ENCODE measurements at regions of chr4 and their contacts with region 1.

Region 1: DNA sequence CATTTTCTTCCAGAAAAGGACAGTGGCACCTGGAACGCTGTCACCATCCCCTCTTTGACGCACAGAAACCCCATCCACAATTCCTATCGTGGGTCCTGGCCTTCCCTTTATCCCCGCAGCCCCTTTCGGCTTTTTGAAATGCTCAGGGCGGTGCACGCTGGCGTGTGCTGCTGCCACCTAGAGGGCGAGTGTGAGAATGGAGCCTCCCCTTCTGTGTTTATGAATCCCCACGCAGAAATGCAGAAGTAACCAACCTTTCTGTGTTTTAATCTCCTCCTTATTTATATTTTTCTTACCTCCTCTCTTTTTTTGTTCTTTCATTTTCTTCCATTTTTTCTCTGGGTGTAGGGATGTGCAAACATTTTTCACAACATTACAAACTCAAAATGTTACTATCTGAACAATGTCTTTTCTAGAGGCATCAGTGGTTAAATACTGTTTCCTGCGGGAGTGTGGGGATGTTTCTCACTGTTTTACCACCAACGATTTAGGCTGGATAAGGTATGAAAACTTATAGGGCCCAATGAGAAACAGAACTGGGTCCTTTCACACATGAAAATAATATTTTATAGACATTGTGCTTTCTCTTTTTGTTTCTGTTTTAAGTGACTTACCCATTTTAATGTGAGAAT is 50.0 kb downstream of the TMA16 start:
- DNase-seq: peak; percentile 65
- H3K4me3 ChIP-seq: peak overlapping the region in 3 of 4 donors; percentile 20 to 36 (median 30)
- H3K27ac ChIP-seq: no peak overlapping the region
- H3K4me1 ChIP-seq: peaks cover 0 to 6% (median 0%) of the 10 kb centered on the region in 4 donors
- H3K27me3 ChIP-seq: no peaks in the 10 kb centered on the region
- CTCF ChIP-seq: peak; percentile 38 to 92 (median 68)
- EP300 ChIP-seq: no peak
- POLR2A ChIP-seq: no peak

Region 2: DNA sequence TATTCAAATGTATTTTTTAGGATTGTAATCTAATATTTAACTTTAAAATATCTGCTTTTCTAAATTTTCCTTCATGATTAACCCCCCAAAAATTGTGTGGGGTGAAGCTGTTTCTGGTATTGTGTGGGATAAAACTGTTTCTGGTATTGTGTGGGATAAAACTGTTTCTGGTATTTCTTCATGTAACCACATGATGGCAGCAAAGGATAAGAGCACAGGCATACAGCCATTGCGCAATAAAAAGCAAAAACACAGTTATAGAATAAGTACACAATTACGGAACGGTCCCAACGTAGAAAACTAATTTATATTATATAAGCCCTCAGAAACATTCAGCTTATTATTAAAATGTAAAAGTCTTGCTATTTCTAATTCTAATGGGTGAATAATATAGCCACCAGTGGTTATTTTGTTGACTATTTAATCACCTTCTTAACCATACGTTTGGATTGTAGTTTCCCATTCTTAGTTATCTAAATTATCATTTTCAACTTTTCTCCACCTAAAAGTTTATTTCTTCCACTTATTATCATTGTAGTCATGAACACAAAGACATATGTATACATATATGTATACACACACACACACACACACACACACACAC is 1046.9 kb before region 1 on chr4:
- intact Hi-C with region 1: loop called (anchors 5 kb)
- DNase-seq: no peak
- H3K4me3 ChIP-seq: no peak overlapping the region
- H3K27ac ChIP-seq: no peak overlapping the region
- H3K4me1 ChIP-seq: no peaks in the 10 kb centered on the region
- H3K27me3 ChIP-seq: peaks cover 0 to 3% (median 0%) of the 10 kb centered on the region in 3 donors
- CTCF ChIP-seq: peak; percentile 59 to 87 (median 80)
- EP300 ChIP-seq: no peak
- POLR2A ChIP-seq: no peak

Region 3: GRCh38 chr4:163484906-163485305 is 59.6 kb before region 1 on chr4:
- intact Hi-C with region 1: loop called (anchors 2 kb)
- DNase-seq: no peak
- H3K4me3 ChIP-seq: no peak overlapping the region
- H3K27ac ChIP-seq: no peak overlapping the region
- H3K4me1 ChIP-seq: no peaks in the 10 kb centered on the region
- H3K27me3 ChIP-seq: no peaks in the 10 kb centered on the region
- CTCF ChIP-seq: peak in 1 of 4 experiments; percentile 57
- EP300 ChIP-seq: no peak
- POLR2A ChIP-seq: no peak

Measured in sigmoid colon (tissue), 7 donors.